ENCODE measurements at regions of chr20 and their contacts with region 1.

Region 1: DNA sequence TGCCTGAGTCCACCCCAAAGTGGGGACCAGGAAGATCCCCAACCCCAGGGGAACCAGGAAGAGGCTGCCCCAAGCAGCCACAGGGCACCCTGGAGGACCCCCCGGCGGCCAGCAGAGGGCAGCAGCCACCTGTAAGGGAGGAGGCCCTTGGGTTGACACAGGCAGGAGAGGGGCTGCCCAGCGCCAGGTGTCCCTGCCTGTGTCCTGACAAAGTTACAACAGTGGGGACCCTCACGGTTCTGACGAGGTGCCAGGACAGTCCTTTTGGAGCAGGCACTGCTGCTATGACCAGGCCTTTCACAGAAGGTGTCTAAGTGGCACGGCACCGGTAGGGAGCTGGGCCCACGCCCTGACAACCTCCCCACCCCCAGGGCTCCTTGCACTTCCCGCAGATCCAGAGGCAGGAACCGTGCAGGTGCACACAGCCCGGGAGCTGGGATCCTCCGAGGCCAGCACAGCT is 176.7 kb downstream of the BMP7 start:
- DNase-seq: peak; percentile 84
- CTCF ChIP-seq: peak; percentile 84

Region 2: DNA sequence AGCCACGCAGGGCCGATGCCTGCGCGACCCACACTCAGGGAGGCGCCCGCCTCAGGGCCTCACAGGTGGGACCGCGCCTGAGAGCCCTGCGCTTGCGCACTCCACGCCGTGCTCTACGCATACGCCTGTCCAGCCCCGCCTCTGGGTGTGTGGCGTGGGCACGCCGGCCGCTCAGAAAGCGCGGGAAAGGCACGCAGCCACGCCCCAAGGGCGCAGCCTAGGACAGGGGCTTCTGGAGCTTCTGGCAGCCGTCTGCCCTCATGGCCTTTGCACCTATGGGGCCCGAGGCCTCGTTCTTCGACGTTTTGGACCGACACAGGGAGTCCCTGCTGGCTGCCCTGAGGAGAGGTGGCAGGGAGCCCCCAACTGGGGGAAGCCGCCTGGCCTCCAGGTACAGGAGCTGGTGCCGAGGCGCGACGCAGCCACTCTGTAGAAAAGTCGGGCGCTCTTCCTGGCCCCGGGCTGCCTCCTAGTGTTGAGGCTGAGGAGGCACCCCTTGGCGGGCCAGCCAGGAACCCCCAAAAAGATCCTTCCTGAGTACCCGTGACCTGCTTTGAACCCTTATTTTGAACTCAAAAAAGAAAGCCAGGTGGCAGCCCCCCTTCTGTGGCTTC is 240.0 kb after region 1 on chr20 and contains the start of gene SPO11:
- in situ Hi-C with region 1: loop called (anchors 10 kb)
- DNase-seq: no peak
- CTCF ChIP-seq: peak; percentile 19